ENCODE measurements at regions of chr19 and their contacts with region 1.

Region 1: GRCh38 chr19:4199699-4200293 is 17.3 kb downstream of the ANKRD24 start:
- DNase-seq: no peak
- ATAC-seq: no peak
- H3K4me3 Mint-ChIP-seq: no peak overlapping the region
- H3K27ac Mint-ChIP-seq: no peak overlapping the region
- H3K4me1 Mint-ChIP-seq: peaks cover 8% of the 10 kb centered on the region
- H3K27me3 Mint-ChIP-seq: peaks cover 34% of the 10 kb centered on the region

Region 2: DNA sequence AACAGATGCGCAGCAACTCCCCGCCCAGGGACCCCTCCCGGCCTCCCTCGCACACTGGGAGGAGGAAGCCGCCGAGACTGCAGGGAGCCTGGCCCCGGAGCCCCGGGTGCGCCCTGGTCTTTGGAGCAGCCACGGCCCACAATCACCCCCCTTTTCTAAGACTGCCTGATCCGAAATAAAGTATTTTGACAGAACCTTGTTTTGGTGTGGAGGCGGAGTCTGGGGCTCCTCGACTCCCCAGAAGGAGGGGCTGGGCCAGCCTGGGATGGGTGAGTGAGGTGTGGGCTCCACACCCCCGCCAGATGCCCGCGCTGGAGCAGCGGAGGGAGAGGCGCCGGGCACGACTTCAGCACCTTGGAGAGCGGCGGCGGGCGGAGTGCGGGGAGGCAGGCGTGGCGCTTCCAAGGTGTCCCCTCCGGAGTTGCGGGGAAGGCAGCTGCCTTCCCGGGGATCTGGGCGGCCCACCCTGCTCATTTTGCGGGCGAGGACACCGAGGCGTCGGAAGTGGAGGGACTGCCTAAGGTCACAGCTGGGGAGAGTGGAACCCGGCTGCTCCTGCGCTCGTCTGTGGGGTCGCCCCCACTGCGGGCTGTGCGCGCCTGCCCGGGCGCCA is 26.8 kb before region 1 on chr19:
- CTCF ChIA-PET with region 1: no interaction called
- POLR2A ChIA-PET with region 1: no interaction called
- intact Hi-C with region 1: loop called in 1 of 2 experiments (anchors 5 kb)
- DNase-seq: peak; percentile 84
- ATAC-seq: peak; percentile 85
- H3K4me3 Mint-ChIP-seq: no peak overlapping the region
- H3K27ac Mint-ChIP-seq: no peak overlapping the region
- H3K4me1 Mint-ChIP-seq: no peaks in the 10 kb centered on the region
- H3K27me3 Mint-ChIP-seq: peaks cover 12% of the 10 kb centered on the region

Measured in activated CD4-positive, alpha-beta T cell treated with anti-CD3 and anti-CD28 coated beads for 36 hours (primary cell).